Right ventricle myocardium superior (tissue), 1 donor: ENCODE measurements at regions of chr11 and their contacts with region 1.

Region 1: GRCh38 chr11:33467966-33468365 is 210.8 kb downstream of the HIPK3 start:
- DNase-seq: no peak
- ATAC-seq: no peak

Region 2: GRCh38 chr11:33362051-33362910 is 105.7 kb before region 1 on chr11:
- intact Hi-C with region 1: no loop called
- DNase-seq: no peak
- ATAC-seq: peak; percentile 60

Region 3: DNA sequence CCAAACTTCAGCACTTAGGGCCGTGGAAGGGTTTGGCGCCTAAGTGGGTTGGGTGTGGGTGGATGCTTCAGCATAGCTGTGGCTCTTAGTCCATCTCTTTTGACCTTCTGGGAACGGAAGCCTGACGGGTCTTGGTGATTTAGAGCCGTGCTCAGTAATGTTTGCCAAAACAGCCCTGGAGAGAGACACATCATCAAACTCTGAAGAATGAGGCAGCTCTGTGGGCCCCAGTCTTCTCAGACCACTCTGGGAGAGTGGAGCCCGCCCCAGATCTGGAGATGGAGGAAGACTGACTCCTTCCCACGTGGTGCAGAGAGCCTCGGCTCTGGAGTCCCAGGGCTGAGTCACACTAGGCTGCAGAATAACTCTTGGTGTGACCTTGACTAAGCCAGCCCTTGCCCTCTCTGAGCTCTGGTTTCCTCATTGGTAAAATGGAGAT is 63.8 kb after region 1 on chr11:
- intact Hi-C with region 1: loop called (anchors 5 kb)
- DNase-seq: no peak
- ATAC-seq: no peak

Region 4: DNA sequence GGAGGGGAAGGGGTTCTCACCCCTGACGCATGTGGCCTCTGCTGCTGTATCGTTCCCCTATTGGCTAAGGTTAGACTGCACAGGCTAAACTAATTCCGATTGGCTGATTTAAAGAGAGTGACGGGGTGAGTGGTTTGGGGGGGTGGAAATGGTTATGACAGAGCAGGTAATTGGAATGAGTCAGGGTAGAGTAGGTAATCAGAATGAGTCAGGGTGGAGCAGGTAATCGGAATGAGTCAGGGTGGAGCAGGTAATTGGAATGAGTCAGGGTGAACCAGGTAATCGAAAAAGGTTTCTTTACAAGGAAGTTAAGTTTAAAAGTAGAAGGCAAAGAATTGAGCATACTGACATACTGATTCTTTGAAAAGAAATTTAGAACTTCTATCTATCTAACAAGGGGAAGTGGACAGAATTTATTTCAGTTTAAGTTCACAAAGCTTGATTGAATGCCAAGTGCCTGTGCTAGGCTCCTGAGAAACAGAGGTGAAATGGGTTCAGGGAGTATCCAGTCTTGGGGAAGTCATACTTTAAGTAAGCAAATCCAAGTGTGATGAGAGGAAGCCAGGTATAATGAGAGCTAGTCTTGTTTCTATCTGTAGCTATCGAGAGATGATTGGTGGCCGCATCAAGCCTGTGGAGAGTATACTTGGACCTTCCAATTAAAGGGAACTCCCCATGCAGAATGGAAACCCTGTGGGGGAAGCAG is 174.6 kb after region 1 on chr11:
- intact Hi-C with region 1: no loop called
- DNase-seq: no peak
- ATAC-seq: no peak